ENCODE measurements at regions of chr20 and their contacts with region 1.

Region 1: GRCh38 chr20:13671916-13672378 is 33.2 kb upstream of the TASP1 start:
- DNase-seq: peak; percentile 55
- H3K4me3 ChIP-seq: no peak overlapping the region
- CTCF ChIP-seq: no peak

Region 2: GRCh38 chr20:13588049-13588448 is 83.9 kb before region 1 on chr20:
- in situ Hi-C with region 1: no loop called
- DNase-seq: no peak
- H3K4me3 ChIP-seq: no peak overlapping the region
- CTCF ChIP-seq: no peak

Region 3: GRCh38 chr20:13723011-13723410 is 51.1 kb after region 1 on chr20:
- in situ Hi-C with region 1: loop called (anchors 5 kb)
- DNase-seq: no peak
- H3K4me3 ChIP-seq: no peak overlapping the region
- CTCF ChIP-seq: no peak